A549 (cell line): ENCODE measurements at regions of chr17 and their contacts with region 1.

Region 1: DNA sequence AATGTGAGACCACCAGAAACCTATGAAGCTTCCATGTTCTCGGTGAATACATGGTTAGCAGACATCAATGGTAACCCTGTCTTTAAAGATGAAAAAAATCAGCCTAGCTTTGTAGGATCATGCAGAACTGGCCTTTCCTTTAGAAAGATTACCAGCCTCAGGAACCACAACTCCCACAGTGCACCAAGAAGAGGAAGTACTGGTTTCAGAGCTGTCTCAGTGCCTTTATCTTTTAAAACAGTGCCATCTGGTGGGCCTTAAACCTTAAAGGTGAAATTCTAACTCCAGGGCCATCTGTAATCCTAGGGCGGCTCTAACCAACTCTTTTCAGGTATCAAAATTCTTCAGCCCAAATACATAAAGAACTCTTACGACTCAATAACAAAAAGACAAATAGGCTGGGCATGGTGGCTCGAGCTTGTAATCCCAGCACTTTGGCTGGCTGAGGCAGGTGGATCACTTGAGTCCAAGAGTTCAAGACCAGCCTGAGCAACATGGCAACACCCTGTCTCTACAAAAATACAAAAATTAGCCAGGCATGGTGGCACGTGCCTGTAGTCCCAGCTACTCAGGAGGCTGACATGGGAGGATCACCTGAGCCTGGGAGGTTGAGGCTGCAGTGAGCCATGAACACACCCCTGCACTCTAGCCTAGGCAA is 5.4 kb downstream of the ATPAF2 start:
- DNase-seq: peak; percentile 86 to 89
- ATAC-seq: peak; percentile 96 to 97
- H3K4me3 ChIP-seq: no peak overlapping the region
- H3K27ac ChIP-seq: peak overlapping the region in 1 of 2 experiments; percentile 27; a peak in 1 of 6 replicates
- H3K4me1 ChIP-seq: peaks cover 10% of the 10 kb centered on the region; the same call in 2 of the 3 replicates
- CTCF ChIP-seq: peak; percentile 93
- EP300 ChIP-seq: no peak
- POLR2A ChIP-seq: no peak
- RAD21 ChIP-seq: peak; percentile 96 to 98

Region 2: DNA sequence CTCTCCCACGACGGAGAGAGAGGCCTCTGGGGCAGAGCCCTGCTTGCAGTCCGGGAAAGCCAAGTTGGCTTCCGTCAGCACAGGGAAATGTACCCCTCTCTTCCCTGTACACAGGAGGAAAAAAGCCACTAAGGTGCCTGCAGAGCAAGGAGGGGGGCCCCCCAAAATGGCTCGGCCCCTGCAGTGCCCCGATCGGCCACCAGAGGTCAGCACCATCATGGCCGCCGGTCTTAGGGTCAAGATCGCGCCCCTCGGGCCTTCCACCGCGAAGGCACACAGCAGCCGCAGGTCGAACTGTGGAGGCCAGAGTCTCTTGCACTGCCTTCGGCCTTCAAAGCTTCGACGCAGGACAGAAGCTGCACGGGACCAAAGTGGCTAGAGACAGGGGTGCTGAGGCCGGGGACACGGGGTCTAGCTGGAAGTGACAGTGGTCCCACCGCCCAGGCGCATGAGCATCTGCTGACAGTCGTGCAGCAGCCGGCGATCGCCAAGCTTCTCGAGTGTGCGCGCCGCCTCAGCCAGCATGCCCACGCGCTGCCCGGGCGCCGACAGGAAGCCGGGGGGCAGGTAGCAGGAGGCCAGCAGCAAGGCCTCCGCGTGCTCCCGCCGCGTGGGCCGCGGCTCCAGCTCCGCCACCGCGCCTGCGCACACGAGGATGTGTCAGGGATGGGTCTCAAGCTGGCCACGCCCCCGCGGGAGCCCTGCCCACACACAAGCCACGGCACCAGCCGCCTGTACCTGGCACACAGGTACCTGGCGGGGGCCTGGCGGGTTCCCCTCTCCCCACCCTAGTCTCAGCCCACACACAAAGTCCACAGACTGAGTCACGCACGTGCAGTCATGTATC is 221.1 kb before region 1 on chr17:
- CTCF ChIA-PET with region 1: interaction called, 27 read pairs
- POLR2A ChIA-PET with region 1: no interaction called
- DNase-seq: peak; percentile 82 to 89
- ATAC-seq: peak; percentile 1 to 46; a peak in 3 of 6 replicates
- H3K4me3 ChIP-seq: 0 out of 3 replicates have a peak overlapping the region, but pooled peaks have one; percentile 17
- H3K27ac ChIP-seq: peak overlapping the region; percentile 62 to 78
- H3K4me1 ChIP-seq: peaks cover 63% of the 10 kb centered on the region
- CTCF ChIP-seq: peak; percentile 97
- EP300 ChIP-seq: no peak
- POLR2A ChIP-seq: no peak
- RAD21 ChIP-seq: peak; percentile 90 to 94

Region 3: GRCh38 chr17:17868641-17869522 is 164.7 kb before region 1 on chr17:
- CTCF ChIA-PET with region 1: interaction called, 11 read pairs
- POLR2A ChIA-PET with region 1: no interaction called
- DNase-seq: no peak
- ATAC-seq: no peak
- H3K4me3 ChIP-seq: no peak overlapping the region
- H3K27ac ChIP-seq: no peak overlapping the region
- H3K4me1 ChIP-seq: peaks cover 5% of the 10 kb centered on the region; the same call in 1 of the 3 replicates
- CTCF ChIP-seq: no peak
- EP300 ChIP-seq: no peak
- POLR2A ChIP-seq: no peak
- RAD21 ChIP-seq: no peak

Region 4: DNA sequence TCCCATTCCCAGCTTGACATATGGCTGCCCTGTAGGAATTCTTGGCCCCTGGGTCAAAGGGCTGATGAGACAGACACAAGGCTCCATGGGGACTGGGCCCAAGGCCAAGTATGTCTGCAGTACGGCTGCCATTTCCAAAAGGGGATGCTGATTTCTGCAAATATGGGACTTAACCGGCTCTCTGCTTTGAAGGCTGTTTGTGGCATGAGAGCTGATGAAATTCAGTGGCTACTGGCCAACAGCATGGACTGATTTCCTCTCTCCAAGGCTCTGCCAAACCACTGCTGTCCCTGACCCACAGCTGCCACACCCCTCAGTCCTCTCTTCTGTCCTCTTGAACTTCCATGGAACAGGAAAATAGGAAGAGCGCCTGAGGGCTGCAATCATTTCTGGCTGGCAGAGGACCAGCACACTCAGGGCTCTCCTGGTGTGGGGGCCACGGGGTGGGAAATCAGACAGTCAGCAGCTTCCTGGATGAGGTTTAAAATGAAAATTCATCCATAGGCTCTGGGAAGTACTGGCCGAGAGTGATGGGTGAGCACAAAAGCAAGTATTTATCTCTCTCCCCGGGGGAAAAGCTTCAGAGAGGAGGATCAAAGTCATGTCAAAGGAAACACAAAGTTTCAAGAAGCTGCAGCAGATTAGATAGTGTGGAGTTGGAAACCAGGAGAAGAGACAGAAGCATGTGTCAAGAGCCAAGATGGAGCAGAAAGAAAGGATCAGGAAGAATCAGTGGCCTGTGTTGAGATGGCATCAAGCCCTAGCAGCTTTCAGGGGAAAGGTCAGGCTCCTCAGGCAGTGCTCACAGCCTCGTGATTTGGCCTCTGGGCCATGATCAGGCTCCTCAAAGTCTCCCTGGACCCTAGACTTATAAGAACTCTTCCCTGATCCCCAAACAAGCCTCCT is 132.7 kb before region 1 on chr17:
- CTCF ChIA-PET with region 1: interaction called, 14 read pairs
- POLR2A ChIA-PET with region 1: no interaction called
- DNase-seq: peak; percentile 83 to 85
- ATAC-seq: peak; percentile 83 to 84
- H3K4me3 ChIP-seq: no peak overlapping the region
- H3K27ac ChIP-seq: peak overlapping the region; percentile 74 to 84
- H3K4me1 ChIP-seq: peaks cover 50% of the 10 kb centered on the region
- CTCF ChIP-seq: no peak
- EP300 ChIP-seq: peak; percentile 12 to 78; a peak in 2 of 5 replicates
- POLR2A ChIP-seq: no peak
- RAD21 ChIP-seq: no peak

Region 5: DNA sequence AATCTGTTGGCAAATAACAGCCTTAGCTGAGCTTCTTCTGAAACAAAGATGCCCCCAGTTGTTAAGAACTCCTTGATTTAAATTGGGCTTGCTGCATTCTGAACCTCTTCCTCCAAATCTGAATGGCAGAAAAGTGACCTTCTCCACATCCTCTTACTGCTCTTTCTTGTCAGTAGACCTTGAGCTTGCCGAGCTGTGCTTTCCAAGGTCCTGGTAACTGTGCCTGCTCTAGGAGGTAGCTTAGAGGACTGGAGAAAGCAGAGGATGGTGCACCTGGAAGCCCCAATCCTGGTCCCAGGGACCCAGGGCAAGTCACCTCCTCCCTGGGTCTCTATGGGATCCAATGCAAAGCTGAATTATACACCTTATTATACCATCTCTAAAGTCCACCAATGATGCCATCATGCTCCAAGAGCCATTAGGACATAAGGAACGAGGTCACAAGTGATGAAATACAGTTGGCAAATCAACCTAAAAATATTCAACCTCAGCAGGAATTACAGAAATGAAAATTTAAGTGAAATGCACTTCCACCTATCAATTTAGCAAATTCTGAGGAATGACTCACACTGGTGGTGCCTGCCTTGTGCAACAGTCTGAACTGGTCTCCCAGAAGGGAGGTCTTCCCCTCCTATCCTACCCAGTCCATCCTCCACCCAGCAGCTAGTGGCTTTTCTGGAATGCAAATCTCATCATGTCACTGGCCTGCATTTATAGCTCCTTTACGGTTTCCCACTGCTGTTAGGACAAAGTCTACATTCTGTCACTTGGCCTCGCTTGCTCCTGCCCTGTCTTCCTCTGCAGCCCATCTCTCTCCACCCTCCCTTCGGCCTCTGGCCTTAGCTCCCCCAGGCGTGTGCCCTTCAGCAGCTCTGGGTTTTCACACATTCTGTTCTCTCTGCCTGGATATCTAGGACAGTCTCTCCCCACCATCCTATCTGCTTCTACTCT is 98.0 kb before region 1 on chr17:
- CTCF ChIA-PET with region 1: interaction called, 13 read pairs
- POLR2A ChIA-PET with region 1: no interaction called
- DNase-seq: peak; percentile 34 to 42
- ATAC-seq: peak; percentile 67 to 80; a peak in 5 of 6 replicates
- H3K4me3 ChIP-seq: no peak overlapping the region
- H3K27ac ChIP-seq: peak overlapping the region; percentile 13 to 71; a peak in 4 of 6 replicates
- H3K4me1 ChIP-seq: peaks cover 37% of the 10 kb centered on the region
- CTCF ChIP-seq: no peak
- EP300 ChIP-seq: no peak
- POLR2A ChIP-seq: no peak
- RAD21 ChIP-seq: no peak

Region 6: GRCh38 chr17:17985555-17985954 is 48.0 kb before region 1 on chr17:
- CTCF ChIA-PET with region 1: interaction called, 29 read pairs
- POLR2A ChIA-PET with region 1: no interaction called
- DNase-seq: peak in 1 of 2 experiments; percentile 29
- ATAC-seq: peak in 1 of 2 experiments; percentile 48; a peak in 2 of 6 replicates
- H3K4me3 ChIP-seq: no peak overlapping the region
- H3K27ac ChIP-seq: peak overlapping the region in 1 of 2 experiments; percentile 33; a peak in 3 of 6 replicates
- H3K4me1 ChIP-seq: peaks cover 15% of the 10 kb centered on the region
- CTCF ChIP-seq: peak; percentile 28; the same call in 2 of the 3 replicates
- EP300 ChIP-seq: no peak
- POLR2A ChIP-seq: no peak
- RAD21 ChIP-seq: peak; percentile 28 to 65; a peak in 3 of 5 replicates

Region 7: GRCh38 chr17:17999364-18000029 is 34.1 kb before region 1 on chr17:
- CTCF ChIA-PET with region 1: interaction called, 20 read pairs
- POLR2A ChIA-PET with region 1: no interaction called
- DNase-seq: no peak
- ATAC-seq: peak; percentile 45 to 52; a peak in 4 of 6 replicates
- H3K4me3 ChIP-seq: no peak overlapping the region
- H3K27ac ChIP-seq: no peak overlapping the region
- H3K4me1 ChIP-seq: peaks cover 2% of the 10 kb centered on the region; the same call in 1 of the 3 replicates
- CTCF ChIP-seq: no peak
- EP300 ChIP-seq: no peak
- POLR2A ChIP-seq: no peak
- RAD21 ChIP-seq: no peak

Region 8: GRCh38 chr17:18203308-18203707 is 169.7 kb after region 1 on chr17:
- CTCF ChIA-PET with region 1: no interaction called
- POLR2A ChIA-PET with region 1: no interaction called
- DNase-seq: no peak
- ATAC-seq: peak in 1 of 2 experiments; percentile 50; a peak in 2 of 6 replicates
- H3K4me3 ChIP-seq: no peak overlapping the region
- H3K27ac ChIP-seq: 0 out of 6 replicates have a peak overlapping the region, but pooled peaks of 1 of the 2 experiments have one; percentile 6
- H3K4me1 ChIP-seq: peaks cover 14% of the 10 kb centered on the region
- CTCF ChIP-seq: no peak
- EP300 ChIP-seq: no peak
- POLR2A ChIP-seq: no peak
- RAD21 ChIP-seq: no peak